Activated B cell treated with CpG ODN at 0.5 μM for 24 hours (primary cell): ENCODE measurements at regions of chr4 and their contacts with region 1.

Region 1: GRCh38 chr4:2963175-2963965 is at the starts of genes GRK4 and NOP14:
- DNase-seq: peak; percentile 89
- ATAC-seq: peak; percentile 91
- H3K4me3 Mint-ChIP-seq: peak within 1 kb of the TSS; percentile 91
- H3K27ac Mint-ChIP-seq: peak within 1 kb of the TSS; percentile 92
- H3K4me1 Mint-ChIP-seq: peaks cover 29% of the 10 kb centered on the region
- H3K27me3 Mint-ChIP-seq: no peaks in the 10 kb centered on the region
- CTCF ChIP-seq: no peak
- total RNA-seq, gene GRK4: 1.4 and 2.1 TPM in 2 replicates
- total RNA-seq, gene NOP14: 56.3 and 57.3 TPM in 2 replicates

Region 2: DNA sequence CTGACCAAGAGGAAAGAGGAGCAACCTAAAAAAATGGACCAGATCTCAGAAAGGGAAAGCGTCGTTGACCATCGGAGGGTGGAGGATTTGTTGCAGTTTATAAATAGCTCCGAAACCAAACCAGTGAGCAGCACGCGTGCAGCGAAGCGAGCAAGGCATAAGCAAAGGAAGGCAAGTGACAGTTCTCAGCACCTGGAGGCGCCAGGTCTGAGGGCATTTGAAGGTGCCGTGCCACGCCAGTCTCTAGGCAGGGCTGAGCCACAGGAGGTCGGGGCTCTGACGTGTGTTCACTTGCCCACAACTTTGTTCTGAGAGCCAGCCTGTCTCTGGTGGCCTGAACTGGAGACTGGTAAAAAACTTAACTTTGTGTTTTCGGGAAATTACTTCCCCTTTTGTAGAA is 266.9 kb before region 1 on chr4:
- CTCF ChIA-PET with region 1: no interaction called
- POLR2A ChIA-PET with region 1: interaction called, 7 read pairs
- intact Hi-C with region 1: loop called (anchors 2 kb)
- DNase-seq: peak; percentile 72
- ATAC-seq: peak; percentile 90
- H3K4me3 Mint-ChIP-seq: peak overlapping the region; percentile 74
- H3K27ac Mint-ChIP-seq: peak overlapping the region; percentile 96
- H3K4me1 Mint-ChIP-seq: peaks cover 72% of the 10 kb centered on the region
- H3K27me3 Mint-ChIP-seq: no peaks in the 10 kb centered on the region
- CTCF ChIP-seq: no peak

Region 3: DNA sequence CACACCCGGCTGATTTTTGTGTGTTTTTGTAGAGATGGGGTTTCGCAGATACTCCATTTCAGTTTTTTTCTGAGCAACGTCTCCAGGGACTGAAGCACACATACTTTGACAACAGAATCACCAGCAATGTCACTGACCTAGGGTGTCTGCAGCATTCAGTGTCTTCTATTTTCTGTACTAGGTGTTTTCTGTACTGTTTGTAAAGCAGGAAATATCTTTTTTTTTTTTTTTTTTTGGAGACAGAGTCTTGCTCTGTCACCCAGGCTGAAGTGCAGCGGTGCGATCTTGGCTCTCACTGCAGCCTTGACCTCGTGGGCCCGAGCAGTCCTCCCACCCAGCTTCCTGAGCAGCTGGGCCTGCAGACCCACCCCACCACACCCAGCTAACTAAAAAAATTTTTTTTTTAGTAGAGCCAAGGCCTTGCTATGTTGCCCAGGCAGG is 110.9 kb before region 1 on chr4:
- CTCF ChIA-PET with region 1: no interaction called
- POLR2A ChIA-PET with region 1: no interaction called
- intact Hi-C with region 1: no loop called
- DNase-seq: no peak
- ATAC-seq: peak; percentile 77
- H3K4me3 Mint-ChIP-seq: peak overlapping the region; percentile 73
- H3K27ac Mint-ChIP-seq: peak overlapping the region; percentile 82
- H3K4me1 Mint-ChIP-seq: peaks cover 91% of the 10 kb centered on the region
- H3K27me3 Mint-ChIP-seq: no peaks in the 10 kb centered on the region
- CTCF ChIP-seq: no peak

Region 4: GRCh38 chr4:2977211-2978088 is 14.1 kb after region 1 on chr4:
- CTCF ChIA-PET with region 1: interaction called, 10 read pairs
- POLR2A ChIA-PET with region 1: interaction called, 3 read pairs
- intact Hi-C with region 1: no loop called
- DNase-seq: no peak
- ATAC-seq: no peak
- H3K4me3 Mint-ChIP-seq: no peak overlapping the region
- H3K27ac Mint-ChIP-seq: no peak overlapping the region
- H3K4me1 Mint-ChIP-seq: peaks cover 4% of the 10 kb centered on the region
- H3K27me3 Mint-ChIP-seq: no peaks in the 10 kb centered on the region
- CTCF ChIP-seq: no peak